ENCODE measurements at regions of chr3 and their contacts with region 1.

Region 1: DNA sequence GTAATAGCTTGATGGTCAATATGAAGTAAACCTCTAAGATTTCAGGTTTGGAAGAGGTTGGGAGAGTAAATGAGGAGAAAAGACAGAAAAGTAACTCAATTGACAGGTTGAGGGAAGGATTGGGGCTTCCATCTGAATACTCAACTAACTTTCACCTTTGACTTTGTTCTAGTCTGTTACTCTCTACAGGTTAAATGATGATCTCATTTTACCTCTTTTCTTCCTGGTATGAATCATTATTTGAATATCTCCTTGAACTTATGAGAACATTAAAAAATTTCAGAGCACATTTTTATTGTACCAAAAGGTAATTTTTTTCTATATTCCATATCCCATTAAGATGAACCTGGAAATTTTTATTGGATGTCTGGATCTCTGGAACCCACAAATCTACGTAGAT is 87.9 kb upstream of the KCNH8 start:
- DNase-seq: no peak

Region 2: GRCh38 chr3:19093084-19093483 is 32.7 kb after region 1 on chr3:
- intact Hi-C with region 1: no loop called
- DNase-seq: no peak

Region 3: GRCh38 chr3:19866751-19867347 is 806.4 kb after region 1 on chr3:
- intact Hi-C with region 1: loop called (anchors 5 kb)
- DNase-seq: peak in 37 of 42 donors; percentile 18 to 88 (median 65)

Measured in head of caudate nucleus (tissue), 42 donors.